ENCODE measurements at regions of chr5 and their contacts with region 1.

Region 1: GRCh38 chr5:16759147-16759773 is 142.5 kb upstream of the RETREG1 start:
- DNase-seq: no peak
- H3K4me3 ChIP-seq: no peak overlapping the region
- H3K27ac ChIP-seq: no peak overlapping the region; the same call in 1 of the 2 replicates
- H3K4me1 ChIP-seq: peaks cover 0 to 2% (median 1%) of the 10 kb centered on the region in 4 experiments; a peak in 2 of 7 replicates
- H3K27me3 ChIP-seq: no peaks in the 10 kb centered on the region
- CTCF ChIP-seq: no peak
- EP300 ChIP-seq: no peak
- POLR2A ChIP-seq: no peak
- RAD21 ChIP-seq: no peak

Region 2: DNA sequence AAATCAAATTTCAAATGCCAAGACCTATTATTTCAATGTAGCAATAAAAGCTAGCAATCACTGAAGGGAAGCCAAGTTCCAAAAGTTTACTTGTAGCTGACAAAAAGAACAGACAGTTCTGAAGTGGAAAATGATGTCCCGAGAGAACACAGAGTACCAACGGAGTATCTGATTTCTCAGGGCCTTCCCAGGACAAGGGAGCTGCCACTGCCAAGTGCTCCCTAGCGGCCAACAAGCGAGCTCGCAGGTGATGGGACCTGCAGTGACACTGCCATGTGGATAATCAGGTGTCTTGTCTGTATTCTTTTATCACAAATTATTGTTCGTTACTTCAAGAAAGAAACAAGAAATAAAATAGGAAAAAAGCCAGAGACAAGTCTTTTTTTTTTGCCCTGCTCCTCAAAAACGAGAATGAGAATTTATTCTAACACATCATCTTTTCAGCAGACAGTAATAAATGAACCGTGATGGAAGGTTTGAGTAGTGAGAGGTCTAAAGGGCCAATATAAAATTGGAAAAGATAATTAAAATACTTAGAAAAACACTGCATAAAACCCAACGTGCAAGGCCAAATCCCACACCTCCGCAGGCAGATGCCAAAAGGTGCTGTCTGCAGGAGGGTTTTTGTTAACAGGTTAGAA is 17.5 kb after region 1 on chr5:
- CTCF ChIA-PET with region 1: interaction called, 14 read pairs
- POLR2A ChIA-PET with region 1: no interaction called
- DNase-seq: no peak
- H3K4me3 ChIP-seq: no peak overlapping the region
- H3K27ac ChIP-seq: no peak overlapping the region
- H3K4me1 ChIP-seq: peaks cover 0 to 9% (median 3%) of the 10 kb centered on the region in 4 experiments; a peak in 2 of 7 replicates
- H3K27me3 ChIP-seq: no peaks in the 10 kb centered on the region
- CTCF ChIP-seq: peak; percentile 69 to 87 (median 83)
- EP300 ChIP-seq: no peak
- POLR2A ChIP-seq: no peak
- RAD21 ChIP-seq: peak; percentile 69 to 82

Region 3: DNA sequence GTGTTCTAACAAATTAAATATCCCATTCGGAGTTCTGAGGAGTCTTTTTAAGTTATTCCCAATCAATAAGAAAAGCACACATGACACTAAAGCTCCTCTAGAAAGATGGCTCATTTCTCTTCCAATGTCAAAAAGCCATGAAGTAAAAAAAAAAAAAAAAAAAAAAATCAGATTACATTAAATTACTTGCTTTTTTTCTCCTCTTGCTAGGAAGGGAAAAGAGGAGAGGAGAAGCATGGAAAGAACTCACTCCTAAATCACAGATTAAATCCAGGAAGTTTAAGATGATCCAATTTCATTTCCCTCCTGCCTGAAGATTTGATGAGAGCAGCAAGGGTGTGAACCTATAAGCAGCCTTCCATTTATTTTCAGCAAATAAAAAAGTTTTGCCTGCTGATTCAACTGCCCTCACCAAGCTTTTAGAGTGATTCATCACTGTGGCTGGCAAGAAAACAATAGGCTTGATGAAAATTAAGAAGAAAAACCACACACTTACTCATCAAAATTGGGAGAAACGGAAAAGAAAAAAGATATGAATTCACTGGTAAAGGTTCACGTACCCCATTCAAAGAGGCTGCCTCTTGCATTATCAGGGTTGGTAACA is 157.1 kb after region 1 on chr5:
- CTCF ChIA-PET with region 1: no interaction called
- POLR2A ChIA-PET with region 1: no interaction called
- DNase-seq: no peak
- H3K4me3 ChIP-seq: no peak overlapping the region
- H3K27ac ChIP-seq: no peak overlapping the region
- H3K4me1 ChIP-seq: peaks cover 0 to 2% (median 0%) of the 10 kb centered on the region in 4 experiments; a peak in 1 of 7 replicates
- H3K27me3 ChIP-seq: no peaks in the 10 kb centered on the region
- CTCF ChIP-seq: no peak
- EP300 ChIP-seq: no peak
- POLR2A ChIP-seq: no peak
- RAD21 ChIP-seq: no peak